ENCODE measurements at regions of chr20 and their contacts with region 1.

Region 1: GRCh38 chr20:62376112-62377063 is 9.3 kb upstream of the LAMA5 start:
- DNase-seq: peak; percentile 87
- H3K4me3 ChIP-seq: no peak overlapping the region
- H3K27ac ChIP-seq: peak overlapping the region; percentile 81 to 99 (median 86)
- H3K4me1 ChIP-seq: peaks cover 0 to 71% (median 66%) of the 10 kb centered on the region in 4 donors
- H3K27me3 ChIP-seq: no peaks in the 10 kb centered on the region
- CTCF ChIP-seq: peak; percentile 63 to 77 (median 71)
- EP300 ChIP-seq: peak in 1 of 4 donors; percentile 10
- POLR2A ChIP-seq: no peak

Region 2: GRCh38 chr20:62285722-62286121 is 90.7 kb before region 1 on chr20:
- intact Hi-C with region 1: no loop called
- DNase-seq: no peak
- H3K4me3 ChIP-seq: no peak overlapping the region
- H3K27ac ChIP-seq: no peak overlapping the region
- H3K4me1 ChIP-seq: no peaks in the 10 kb centered on the region
- H3K27me3 ChIP-seq: no peaks in the 10 kb centered on the region
- CTCF ChIP-seq: no peak
- EP300 ChIP-seq: no peak
- POLR2A ChIP-seq: no peak

Region 3: GRCh38 chr20:62339647-62340070 is 36.7 kb before region 1 on chr20:
- intact Hi-C with region 1: loop called (anchors 5 kb)
- DNase-seq: no peak
- H3K4me3 ChIP-seq: no peak overlapping the region
- H3K27ac ChIP-seq: no peak overlapping the region
- H3K4me1 ChIP-seq: peaks cover 0 to 6% (median 0%) of the 10 kb centered on the region in 4 donors
- H3K27me3 ChIP-seq: no peaks in the 10 kb centered on the region
- CTCF ChIP-seq: no peak
- EP300 ChIP-seq: no peak
- POLR2A ChIP-seq: no peak

Region 4: DNA sequence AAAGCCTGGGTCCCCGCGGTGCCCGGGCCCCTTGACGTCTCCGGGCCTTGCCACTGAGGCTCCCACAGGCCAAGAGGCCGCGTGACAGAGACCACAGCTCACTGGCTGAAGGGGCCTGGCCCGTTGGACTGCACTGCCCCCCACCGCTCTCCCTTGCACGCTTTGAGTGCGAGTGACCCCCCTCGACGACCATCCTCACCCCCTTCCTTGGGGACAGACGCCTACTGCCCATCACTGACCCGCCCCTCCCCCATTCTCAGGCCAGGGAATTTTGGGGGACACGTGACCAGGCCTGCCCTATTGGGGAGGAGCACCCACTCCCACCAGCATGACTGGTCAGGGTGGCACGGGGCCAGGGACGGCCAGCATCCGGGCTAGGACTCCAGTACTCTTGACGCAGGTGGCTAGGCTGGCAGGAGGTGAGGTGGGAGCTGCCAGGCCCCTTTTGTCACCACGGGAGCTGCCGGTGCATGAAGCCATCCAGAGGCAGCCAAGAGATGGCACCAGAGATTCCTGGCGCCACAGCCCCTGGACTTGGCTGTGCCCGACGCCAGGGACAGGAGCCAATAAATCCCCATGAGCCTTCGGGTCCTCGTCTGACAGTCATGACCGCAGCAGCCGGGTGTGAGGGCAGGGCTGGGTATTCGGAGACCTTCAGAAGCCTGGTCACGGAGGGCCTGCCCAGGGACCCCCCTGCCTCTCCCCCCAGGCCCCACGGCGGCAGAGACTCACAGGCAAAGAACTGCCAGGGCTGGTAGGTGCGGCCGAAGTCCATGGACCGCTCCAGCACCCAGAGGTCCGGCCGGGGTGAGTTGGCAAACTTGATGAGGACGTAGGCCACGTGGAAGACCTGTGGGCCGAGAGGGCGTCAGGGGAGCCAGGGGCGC is 23.7 kb before region 1 on chr20:
- intact Hi-C with region 1: loop called (anchors 1 kb)
- DNase-seq: peak; percentile 96
- H3K4me3 ChIP-seq: no peak overlapping the region
- H3K27ac ChIP-seq: peak overlapping the region; percentile 90 to 99 (median 94)
- H3K4me1 ChIP-seq: peaks cover 0 to 59% (median 57%) of the 10 kb centered on the region in 4 donors
- H3K27me3 ChIP-seq: no peaks in the 10 kb centered on the region
- CTCF ChIP-seq: peak; percentile 15 to 56 (median 20)
- EP300 ChIP-seq: peak in 2 of 4 donors; percentile 57 to 79
- POLR2A ChIP-seq: no peak

Measured in sigmoid colon (tissue), 7 donors.